GM12878 (cell line): ENCODE measurements at regions of chr5 and their contacts with region 1.

Region 1: DNA sequence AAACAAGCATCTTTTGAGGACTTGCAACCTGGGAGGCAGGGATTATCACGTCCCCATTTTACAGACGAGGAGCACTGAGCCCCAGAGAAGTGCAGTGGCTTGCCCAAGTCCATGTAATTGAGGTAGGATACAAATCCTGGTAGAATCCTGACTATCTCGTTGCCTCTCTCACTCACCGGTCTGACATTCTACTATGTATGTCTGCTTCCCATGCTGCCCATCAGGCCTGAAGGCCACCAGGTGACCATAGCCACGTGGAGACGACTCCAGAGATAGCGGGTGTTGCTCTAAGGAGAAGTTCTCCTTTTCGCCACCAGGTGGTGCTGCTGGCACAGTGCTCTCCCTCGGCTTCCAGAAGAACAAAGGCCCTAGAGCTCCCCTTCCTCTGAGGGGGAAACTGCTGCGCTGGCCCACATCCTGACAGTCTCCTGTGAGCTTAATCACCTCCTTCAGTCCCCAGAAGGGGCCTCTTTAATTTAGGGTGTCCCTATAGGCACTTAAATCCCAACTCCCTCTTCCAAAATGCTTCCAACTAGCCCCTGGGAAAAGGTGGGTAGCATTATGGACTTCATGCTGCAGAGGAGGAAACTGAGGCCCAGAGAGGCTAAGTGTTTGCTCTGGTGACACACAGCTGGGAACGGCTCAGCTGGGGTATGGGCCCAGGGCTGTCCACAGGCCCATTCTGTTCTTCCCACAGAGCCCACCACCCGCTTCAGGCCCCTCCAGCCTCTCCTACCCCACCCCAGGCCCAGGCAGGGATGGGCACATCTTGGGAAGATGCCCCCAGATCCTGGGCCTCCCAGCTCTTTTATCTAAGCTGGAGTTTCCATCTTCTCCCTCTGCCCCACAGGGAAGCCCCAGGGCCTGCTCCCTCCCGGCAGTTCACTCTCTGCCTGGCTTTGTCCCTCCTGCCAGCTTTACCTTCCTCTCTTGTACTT is 6.4 kb downstream of the SLC34A1 start:
- DNase-seq: peak; percentile 74
- ATAC-seq: peak; percentile 89
- H3K4me3 ChIP-seq: no peak overlapping the region
- H3K27ac ChIP-seq: peak overlapping the region; percentile 67
- H3K4me1 ChIP-seq: peaks cover 26% of the 10 kb centered on the region
- H3K27me3 ChIP-seq: no peaks in the 10 kb centered on the region
- CTCF ChIP-seq: peak; percentile 91 to 97 (median 94)
- EP300 ChIP-seq: no peak; a peak in 1 of 4 replicates
- POLR2A ChIP-seq: no peak
- RAD21 ChIP-seq: peak; percentile 86

Region 2: DNA sequence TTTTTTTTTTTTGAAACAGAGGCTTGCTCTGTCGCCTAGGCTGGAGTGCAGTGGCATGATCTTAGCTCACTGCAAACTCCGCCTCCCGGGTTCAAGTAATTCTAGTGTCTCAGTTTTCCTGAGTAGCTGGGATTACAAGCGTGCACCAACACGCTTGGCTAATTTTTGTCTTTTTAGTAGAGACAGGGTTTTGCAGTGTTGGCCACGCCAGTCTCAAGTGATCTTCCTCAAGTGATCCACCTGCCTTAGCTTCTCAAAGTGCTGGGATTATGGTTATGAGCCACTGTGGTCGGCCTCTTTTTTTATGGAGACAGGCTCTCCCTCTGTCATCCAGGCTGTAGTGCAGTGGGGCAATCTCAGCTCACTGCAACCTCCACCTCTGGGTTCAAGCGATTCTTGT is 170.1 kb before region 1 on chr5:
- CTCF ChIA-PET with region 1: no interaction called
- POLR2A ChIA-PET with region 1: no interaction called
- RAD21 ChIA-PET with region 1: no interaction called
- SMC1A ChIA-PET with region 1: no interaction called
- in situ Hi-C with region 1: no loop called
- intact Hi-C with region 1: no loop called
- DNase-seq: no peak
- ATAC-seq: no peak
- H3K4me3 ChIP-seq: no peak overlapping the region
- H3K27ac ChIP-seq: no peak overlapping the region
- H3K4me1 ChIP-seq: peaks cover 4% of the 10 kb centered on the region; the same call in 1 of the 2 replicates
- H3K27me3 ChIP-seq: no peaks in the 10 kb centered on the region
- CTCF ChIP-seq: no peak
- EP300 ChIP-seq: no peak
- POLR2A ChIP-seq: no peak
- RAD21 ChIP-seq: no peak

Region 3: GRCh38 chr5:177311723-177312648 is 78.6 kb before region 1 on chr5 and contains the start of gene MXD3:
- CTCF ChIA-PET with region 1: interaction called, 88 read pairs
- POLR2A ChIA-PET with region 1: interaction called, 6 read pairs
- RAD21 ChIA-PET with region 1: interaction called, 35 read pairs
- SMC1A ChIA-PET with region 1: interaction called, 26 read pairs
- in situ Hi-C with region 1: no loop called
- intact Hi-C with region 1: no loop called
- DNase-seq: peak; percentile 76
- ATAC-seq: peak; percentile 89
- H3K4me3 ChIP-seq: peak within 1 kb of the TSS; percentile 93
- H3K27ac ChIP-seq: peak within 1 kb of the TSS; percentile 92
- H3K4me1 ChIP-seq: peaks cover 17% of the 10 kb centered on the region
- H3K27me3 ChIP-seq: no peaks in the 10 kb centered on the region
- CTCF ChIP-seq: no peak
- EP300 ChIP-seq: no peak
- POLR2A ChIP-seq: peak; percentile 78
- RAD21 ChIP-seq: no peak
- polyA plus RNA-seq, gene MXD3: 0.24 to 0.93 TPM

Region 4: GRCh38 chr5:177357459-177358351 is 32.9 kb before region 1 on chr5 and contains the start of gene RGS14:
- CTCF ChIA-PET with region 1: interaction called, 46 read pairs
- POLR2A ChIA-PET with region 1: interaction called, 14 read pairs
- RAD21 ChIA-PET with region 1: interaction called, 29 read pairs
- SMC1A ChIA-PET with region 1: interaction called, 20 read pairs
- in situ Hi-C with region 1: no loop called
- intact Hi-C with region 1: no loop called
- DNase-seq: peak; percentile 77
- ATAC-seq: peak; percentile 91
- H3K4me3 ChIP-seq: peak within 1 kb of the TSS; percentile 99
- H3K27ac ChIP-seq: peak within 1 kb of the TSS; percentile 91
- H3K4me1 ChIP-seq: peaks cover 48% of the 10 kb centered on the region
- H3K27me3 ChIP-seq: no peaks in the 10 kb centered on the region
- CTCF ChIP-seq: no peak
- EP300 ChIP-seq: peak; percentile 25 to 55; a peak in 2 of 4 replicates
- POLR2A ChIP-seq: peak; percentile 82
- RAD21 ChIP-seq: no peak
- polyA plus RNA-seq, gene RGS14: 0.19 to 1.3 TPM

Region 5: DNA sequence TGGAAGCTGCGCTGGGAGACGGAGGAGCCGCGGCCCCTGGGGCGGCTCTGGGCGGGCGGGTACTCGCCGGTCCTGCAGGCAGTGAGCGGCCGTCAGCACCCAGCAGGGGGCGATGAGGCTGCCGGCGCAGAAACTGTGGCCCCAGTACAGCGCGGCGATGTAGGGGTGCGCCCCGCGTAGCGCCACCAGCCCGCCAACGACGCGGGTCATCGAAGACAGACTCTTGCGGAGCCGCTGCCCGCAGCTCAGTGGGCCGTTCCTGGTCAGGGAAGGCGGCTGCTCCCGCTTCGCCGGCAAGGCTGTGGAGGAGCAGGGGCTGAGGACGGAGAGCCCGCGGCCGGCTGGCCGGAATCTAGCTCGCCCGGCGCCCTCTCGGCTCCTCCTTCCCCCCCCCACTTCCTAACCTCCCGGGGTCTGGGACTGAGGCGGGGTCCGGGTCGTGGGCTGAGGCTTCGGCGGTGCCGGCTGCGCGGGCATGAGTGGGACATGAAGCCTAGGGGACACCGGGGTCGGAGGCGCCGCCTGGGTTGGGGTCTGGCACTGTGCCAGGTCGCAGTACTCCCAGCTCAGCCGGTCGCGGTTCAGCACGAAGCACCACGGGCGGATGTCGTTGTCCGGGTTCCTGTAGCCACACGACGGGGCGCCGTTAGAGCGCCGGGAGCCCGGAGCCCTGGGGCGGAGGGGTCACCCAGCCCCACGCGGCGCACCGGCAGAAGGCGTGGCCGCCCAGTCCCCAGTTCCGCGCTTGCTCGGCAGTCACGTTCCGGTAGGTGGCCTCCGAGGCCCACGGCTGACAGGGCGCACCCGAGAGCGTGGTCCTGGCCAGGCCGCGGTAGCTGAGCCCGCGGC is 13.4 kb after region 1 on chr5:
- CTCF ChIA-PET with region 1: interaction called, 240 read pairs
- POLR2A ChIA-PET with region 1: interaction called, 56 read pairs
- RAD21 ChIA-PET with region 1: interaction called, 120 read pairs
- SMC1A ChIA-PET with region 1: interaction called, 97 read pairs
- in situ Hi-C with region 1: no loop called
- intact Hi-C with region 1: no loop called
- DNase-seq: no peak
- ATAC-seq: peak; percentile 93
- H3K4me3 ChIP-seq: peak overlapping the region; percentile 79
- H3K27ac ChIP-seq: peak overlapping the region; percentile 35; the same call in 1 of the 2 replicates
- H3K4me1 ChIP-seq: peaks cover 28% of the 10 kb centered on the region
- H3K27me3 ChIP-seq: no peaks in the 10 kb centered on the region; a peak in 1 of 4 replicates
- CTCF ChIP-seq: peak; percentile 81 to 95 (median 85)
- EP300 ChIP-seq: no peak
- POLR2A ChIP-seq: peak; percentile 55; the same call in 1 of the 2 replicates
- RAD21 ChIP-seq: peak; percentile 87

Region 6: DNA sequence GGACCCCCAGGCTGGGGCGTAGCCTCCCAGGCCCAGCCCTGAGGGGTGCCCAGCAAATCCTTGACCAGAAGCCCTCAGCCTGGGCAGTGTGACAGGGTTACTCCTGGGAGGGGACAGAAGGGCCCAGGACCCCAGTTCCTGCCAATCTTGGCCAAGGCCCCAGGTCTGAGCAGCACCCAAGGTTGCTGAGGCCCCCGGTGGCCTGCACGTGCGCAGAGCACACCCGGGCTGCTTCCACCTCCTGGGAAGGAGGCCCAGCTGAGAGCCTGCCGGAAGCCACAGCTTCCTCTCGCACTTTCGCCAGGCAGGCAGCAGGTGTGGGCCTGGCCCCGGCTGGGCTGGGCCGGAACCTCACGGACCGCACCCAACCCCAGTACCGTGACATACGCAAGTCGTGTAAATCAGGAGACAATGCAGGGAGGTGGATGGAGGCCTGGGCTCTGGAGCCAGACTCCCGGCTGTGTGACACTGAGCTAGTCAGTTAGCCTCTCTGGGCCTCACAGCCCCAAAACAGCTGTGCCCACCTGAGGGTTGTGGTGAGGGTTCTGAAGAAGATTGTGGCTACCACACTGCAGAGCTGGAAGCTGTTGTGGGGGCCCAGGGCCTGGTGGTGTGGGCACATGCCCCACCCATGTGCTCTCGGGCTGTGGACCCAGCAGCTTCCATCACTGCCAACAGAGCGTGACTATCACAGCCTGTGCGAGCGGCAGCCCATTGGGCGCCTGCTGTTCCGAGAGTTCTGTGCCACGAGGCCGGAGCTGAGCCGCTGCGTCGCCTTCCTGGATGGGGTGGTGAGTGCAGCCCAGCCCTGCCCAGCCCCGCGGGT is 40.9 kb after region 1 on chr5:
- CTCF ChIA-PET with region 1: interaction called, 25 read pairs
- POLR2A ChIA-PET with region 1: interaction called, 13 read pairs
- RAD21 ChIA-PET with region 1: interaction called, 38 read pairs
- SMC1A ChIA-PET with region 1: interaction called, 22 read pairs
- in situ Hi-C with region 1: no loop called
- intact Hi-C with region 1: no loop called
- DNase-seq: peak; percentile 77
- ATAC-seq: peak; percentile 59
- H3K4me3 ChIP-seq: peak overlapping the region; percentile 83; the same call in 1 of the 2 replicates
- H3K27ac ChIP-seq: peak overlapping the region; percentile 94
- H3K4me1 ChIP-seq: peaks cover 49% of the 10 kb centered on the region
- H3K27me3 ChIP-seq: no peaks in the 10 kb centered on the region
- CTCF ChIP-seq: no peak
- EP300 ChIP-seq: peak; percentile 55 to 61; a peak in 3 of 4 replicates
- POLR2A ChIP-seq: no peak
- RAD21 ChIP-seq: no peak

Region 7: DNA sequence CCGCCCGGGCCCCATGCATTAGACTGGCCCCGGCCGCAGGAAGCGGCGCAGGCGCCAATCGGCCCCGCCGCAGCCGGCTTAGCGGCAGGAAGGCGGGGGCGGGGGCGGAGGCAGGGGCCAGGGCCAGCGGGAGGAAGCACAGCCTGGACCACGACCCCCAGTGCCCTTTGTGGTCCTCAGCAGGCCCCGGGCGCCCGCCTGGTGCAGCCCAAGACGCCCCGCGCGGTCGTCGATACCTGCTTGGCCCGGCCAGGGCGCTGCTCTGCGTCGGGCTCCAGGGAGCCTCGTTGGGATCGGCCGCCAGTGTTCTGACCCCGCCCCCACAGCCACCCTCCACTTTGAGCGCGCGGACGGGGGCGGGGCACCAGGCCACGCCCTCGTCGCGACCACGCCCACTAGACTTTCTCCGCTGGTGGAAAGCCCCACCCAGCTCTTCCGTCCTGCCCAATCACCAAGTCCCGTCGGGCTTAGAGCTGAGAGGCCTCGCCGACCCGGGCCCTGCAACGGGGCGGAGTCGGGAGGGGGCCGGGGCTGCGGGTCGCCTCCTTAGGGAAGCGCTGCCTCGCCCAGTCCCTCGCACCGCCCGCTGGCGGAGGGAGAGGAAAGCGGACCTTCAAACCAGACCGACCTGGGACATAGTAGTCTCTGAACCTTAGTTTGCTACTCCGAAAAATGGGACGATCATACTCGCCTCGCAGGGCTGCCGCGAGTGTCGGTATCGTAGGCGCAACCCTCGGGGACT is 106.8 kb after region 1 on chr5 and contains the start of gene PDLIM7:
- CTCF ChIA-PET with region 1: interaction called, 56 read pairs
- POLR2A ChIA-PET with region 1: interaction called, 18 read pairs
- RAD21 ChIA-PET with region 1: interaction called, 28 read pairs
- SMC1A ChIA-PET with region 1: interaction called, 23 read pairs
- in situ Hi-C with region 1: no loop called
- intact Hi-C with region 1: loop called (anchors 1 kb)
- DNase-seq: peak; percentile 77
- ATAC-seq: peak; percentile 81
- H3K4me3 ChIP-seq: peak within 1 kb of the TSS; percentile 86
- H3K27ac ChIP-seq: peak within 1 kb of the TSS; percentile 74
- H3K4me1 ChIP-seq: peaks cover 42% of the 10 kb centered on the region
- H3K27me3 ChIP-seq: no peaks in the 10 kb centered on the region; a peak in 1 of 4 replicates
- CTCF ChIP-seq: 0 out of 6 replicates have a peak, but pooled peaks of 1 of the 3 experiments have one; percentile 0
- EP300 ChIP-seq: no peak
- POLR2A ChIP-seq: peak; percentile 98
- RAD21 ChIP-seq: no peak
- polyA plus RNA-seq, gene PDLIM7: 0.82 to 2.3 TPM